CD4-positive, alpha-beta T cell (primary cell): ENCODE measurements at regions of chr4 and their contacts with region 1.

Region 1: GRCh38 chr4:108018040-108018883 is 28.6 kb downstream of the HADH start:
- DNase-seq: peak; percentile 74 to 92 (median 84)
- ATAC-seq: peak; percentile 89
- H3K4me3 ChIP-seq: no peak overlapping the region
- H3K4me3 Mint-ChIP-seq: no peak overlapping the region
- H3K27ac ChIP-seq: no peak overlapping the region
- H3K27ac Mint-ChIP-seq: no peak overlapping the region
- H3K4me1 ChIP-seq: no peaks in the 10 kb centered on the region
- H3K4me1 Mint-ChIP-seq: peaks cover 15% of the 10 kb centered on the region
- H3K27me3 ChIP-seq: no peaks in the 10 kb centered on the region
- H3K27me3 Mint-ChIP-seq: no peaks in the 10 kb centered on the region
- CTCF ChIP-seq: peak; percentile 85

Region 2: GRCh38 chr4:106690487-106690886 is 1327.8 kb before region 1 on chr4:
- CTCF ChIA-PET with region 1: no interaction called
- POLR2A ChIA-PET with region 1: no interaction called
- intact Hi-C with region 1: no loop called
- DNase-seq: peak in 2 of 14 experiments; percentile 26 to 36
- ATAC-seq: no peak
- H3K4me3 ChIP-seq: no peak overlapping the region
- H3K4me3 Mint-ChIP-seq: no peak overlapping the region
- H3K27ac ChIP-seq: no peak overlapping the region
- H3K27ac Mint-ChIP-seq: no peak overlapping the region
- H3K4me1 ChIP-seq: no peaks in the 10 kb centered on the region
- H3K4me1 Mint-ChIP-seq: no peaks in the 10 kb centered on the region
- H3K27me3 ChIP-seq: no peaks in the 10 kb centered on the region
- H3K27me3 Mint-ChIP-seq: no peaks in the 10 kb centered on the region
- CTCF ChIP-seq: no peak

Region 3: DNA sequence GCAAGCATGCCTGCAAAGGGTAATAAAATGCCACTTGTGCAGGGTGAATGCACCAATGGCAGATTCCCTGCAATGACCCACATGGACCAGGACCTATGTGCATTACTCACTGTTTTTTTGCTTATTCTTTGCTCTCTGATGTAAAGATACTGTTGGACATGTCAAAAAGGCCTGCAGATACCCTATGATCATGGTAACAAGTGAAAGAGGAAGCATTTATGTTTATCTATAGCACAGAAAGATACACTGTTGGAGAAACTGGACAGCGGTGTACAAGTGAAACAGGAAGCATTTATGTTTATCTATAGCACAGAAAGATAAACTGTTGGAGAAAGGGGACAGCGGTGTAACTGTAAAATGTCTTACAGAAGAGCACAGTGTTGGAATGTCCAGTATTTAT is 425.7 kb before region 1 on chr4:
- CTCF ChIA-PET with region 1: no interaction called
- POLR2A ChIA-PET with region 1: no interaction called
- intact Hi-C with region 1: no loop called
- DNase-seq: no peak
- ATAC-seq: no peak
- H3K4me3 ChIP-seq: no peak overlapping the region
- H3K4me3 Mint-ChIP-seq: no peak overlapping the region
- H3K27ac ChIP-seq: no peak overlapping the region
- H3K27ac Mint-ChIP-seq: no peak overlapping the region
- H3K4me1 ChIP-seq: no peaks in the 10 kb centered on the region
- H3K4me1 Mint-ChIP-seq: no peaks in the 10 kb centered on the region
- H3K27me3 ChIP-seq: no peaks in the 10 kb centered on the region
- H3K27me3 Mint-ChIP-seq: peaks cover 11% of the 10 kb centered on the region
- CTCF ChIP-seq: no peak

Region 4: GRCh38 chr4:107780665-107781064 is 237.6 kb before region 1 on chr4:
- CTCF ChIA-PET with region 1: no interaction called
- POLR2A ChIA-PET with region 1: no interaction called
- intact Hi-C with region 1: no loop called
- DNase-seq: peak in 2 of 14 experiments; percentile 4 to 7
- ATAC-seq: no peak
- H3K4me3 ChIP-seq: no peak overlapping the region
- H3K4me3 Mint-ChIP-seq: no peak overlapping the region
- H3K27ac ChIP-seq: no peak overlapping the region
- H3K27ac Mint-ChIP-seq: no peak overlapping the region
- H3K4me1 ChIP-seq: no peaks in the 10 kb centered on the region
- H3K4me1 Mint-ChIP-seq: no peaks in the 10 kb centered on the region
- H3K27me3 ChIP-seq: peaks cover 0 to 4% of the 10 kb centered on the region in 2 experiments
- H3K27me3 Mint-ChIP-seq: peaks cover 31% of the 10 kb centered on the region
- CTCF ChIP-seq: no peak

Region 5: GRCh38 chr4:108060164-108060563 is 41.9 kb after region 1 on chr4:
- CTCF ChIA-PET with region 1: interaction called, 10 read pairs
- POLR2A ChIA-PET with region 1: no interaction called
- intact Hi-C with region 1: no loop called
- DNase-seq: peak in 3 of 14 experiments; percentile 42 to 48 (median 48)
- ATAC-seq: no peak
- H3K4me3 ChIP-seq: no peak overlapping the region
- H3K4me3 Mint-ChIP-seq: no peak overlapping the region
- H3K27ac ChIP-seq: peak overlapping the region in 1 of 2 donors; percentile 38
- H3K27ac Mint-ChIP-seq: peak overlapping the region; percentile 93
- H3K4me1 ChIP-seq: peaks cover 52% of the 10 kb centered on the region
- H3K4me1 Mint-ChIP-seq: peaks cover 94% of the 10 kb centered on the region
- H3K27me3 ChIP-seq: no peaks in the 10 kb centered on the region
- H3K27me3 Mint-ChIP-seq: no peaks in the 10 kb centered on the region
- CTCF ChIP-seq: peak; percentile 12

Region 6: GRCh38 chr4:108512615-108513505 is 494.6 kb after region 1 on chr4:
- CTCF ChIA-PET with region 1: interaction called, 5 read pairs
- POLR2A ChIA-PET with region 1: no interaction called
- intact Hi-C with region 1: loop called in 1 of 2 experiments (anchors 1 kb)
- DNase-seq: peak; percentile 11 to 76 (median 42)
- ATAC-seq: peak; percentile 95
- H3K4me3 ChIP-seq: no peak overlapping the region
- H3K4me3 Mint-ChIP-seq: peak overlapping the region; percentile 78
- H3K27ac ChIP-seq: no peak overlapping the region
- H3K27ac Mint-ChIP-seq: no peak overlapping the region
- H3K4me1 ChIP-seq: peaks cover 3% of the 10 kb centered on the region
- H3K4me1 Mint-ChIP-seq: peaks cover 21% of the 10 kb centered on the region
- H3K27me3 ChIP-seq: no peaks in the 10 kb centered on the region
- H3K27me3 Mint-ChIP-seq: no peaks in the 10 kb centered on the region
- CTCF ChIP-seq: peak; percentile 29

Region 7: GRCh38 chr4:108540536-108540935 is 522.3 kb after region 1 on chr4:
- CTCF ChIA-PET with region 1: no interaction called
- POLR2A ChIA-PET with region 1: no interaction called
- intact Hi-C with region 1: no loop called
- DNase-seq: no peak
- ATAC-seq: no peak
- H3K4me3 ChIP-seq: no peak overlapping the region
- H3K4me3 Mint-ChIP-seq: no peak overlapping the region
- H3K27ac ChIP-seq: no peak overlapping the region
- H3K27ac Mint-ChIP-seq: no peak overlapping the region
- H3K4me1 ChIP-seq: peaks cover 6% of the 10 kb centered on the region
- H3K4me1 Mint-ChIP-seq: peaks cover 49% of the 10 kb centered on the region
- H3K27me3 ChIP-seq: no peaks in the 10 kb centered on the region
- H3K27me3 Mint-ChIP-seq: no peaks in the 10 kb centered on the region
- CTCF ChIP-seq: no peak

Region 8: DNA sequence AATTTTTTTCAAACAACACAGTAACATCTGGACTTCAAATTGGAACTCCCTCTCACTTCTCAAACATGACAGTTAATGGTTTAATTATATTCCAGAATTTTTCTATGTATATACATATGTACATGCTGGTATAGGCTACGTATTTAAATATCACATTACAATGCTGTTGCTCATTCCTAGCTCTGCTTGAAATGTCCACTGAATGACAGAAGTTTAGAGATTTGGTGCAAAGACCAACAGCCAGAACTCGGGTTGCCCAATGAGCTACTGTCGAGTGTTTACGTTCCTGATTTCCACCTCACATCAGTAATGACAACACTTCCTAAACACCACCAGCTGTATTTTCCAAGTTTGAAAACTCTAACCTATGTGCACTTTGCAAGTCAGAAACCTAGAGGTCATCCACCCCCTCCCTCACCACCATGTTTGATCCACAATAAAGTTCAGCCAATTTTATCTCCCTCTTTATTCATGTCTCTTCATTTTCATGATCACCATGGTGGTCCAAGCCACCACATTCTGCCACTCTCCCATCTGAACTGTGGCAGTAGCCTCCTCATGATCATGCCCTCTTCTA is 552.8 kb after region 1 on chr4:
- CTCF ChIA-PET with region 1: interaction called, 62 read pairs
- POLR2A ChIA-PET with region 1: interaction called, 7 read pairs
- intact Hi-C with region 1: loop called (anchors 1 kb)
- DNase-seq: no peak
- ATAC-seq: no peak
- H3K4me3 ChIP-seq: no peak overlapping the region
- H3K4me3 Mint-ChIP-seq: no peak overlapping the region
- H3K27ac ChIP-seq: no peak overlapping the region
- H3K27ac Mint-ChIP-seq: no peak overlapping the region
- H3K4me1 ChIP-seq: peaks cover 9% of the 10 kb centered on the region
- H3K4me1 Mint-ChIP-seq: peaks cover 33% of the 10 kb centered on the region
- H3K27me3 ChIP-seq: no peaks in the 10 kb centered on the region
- H3K27me3 Mint-ChIP-seq: no peaks in the 10 kb centered on the region
- CTCF ChIP-seq: no peak

Region 9: DNA sequence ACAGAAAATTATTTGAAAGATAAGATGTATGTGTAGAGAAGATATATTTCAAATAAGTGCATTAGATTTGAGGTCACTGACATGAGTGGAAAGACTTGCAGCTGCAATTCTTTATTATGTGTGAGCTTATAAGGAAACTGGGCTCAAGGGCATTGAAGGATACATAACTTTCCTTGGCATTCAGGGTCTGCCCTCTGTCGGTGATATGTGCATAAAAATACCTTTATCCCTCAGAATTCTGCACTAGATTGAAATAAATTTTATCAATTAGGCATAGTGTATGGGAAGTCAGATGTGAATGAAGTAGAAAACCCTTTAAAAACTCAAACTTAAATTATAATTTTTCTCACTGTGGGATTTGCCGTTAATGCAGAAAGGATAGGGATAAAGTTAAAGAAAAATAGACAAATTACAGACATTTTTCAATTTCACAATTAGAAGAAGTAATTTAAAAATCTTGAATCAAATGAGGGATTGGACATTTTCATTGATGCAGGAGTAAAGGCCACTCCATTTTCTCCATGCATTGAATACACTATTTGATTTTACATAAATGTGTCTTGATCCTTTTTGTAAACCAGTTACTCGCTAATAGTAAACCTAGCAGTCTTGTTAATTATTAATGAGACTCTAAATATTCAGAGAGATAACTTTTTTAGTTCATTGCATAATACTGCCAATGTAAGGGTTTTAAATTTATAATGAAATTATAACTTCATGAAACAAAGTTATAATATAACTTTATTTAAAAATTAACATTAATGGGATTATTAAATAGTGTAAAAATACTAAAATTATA is 765.6 kb after region 1 on chr4:
- CTCF ChIA-PET with region 1: interaction called, 3 read pairs
- POLR2A ChIA-PET with region 1: no interaction called
- intact Hi-C with region 1: loop called in 1 of 2 experiments (anchors 5 kb)
- DNase-seq: peak in 2 of 14 experiments; percentile 12 to 24
- ATAC-seq: no peak
- H3K4me3 ChIP-seq: no peak overlapping the region
- H3K4me3 Mint-ChIP-seq: no peak overlapping the region
- H3K27ac ChIP-seq: no peak overlapping the region
- H3K27ac Mint-ChIP-seq: no peak overlapping the region
- H3K4me1 ChIP-seq: no peaks in the 10 kb centered on the region
- H3K4me1 Mint-ChIP-seq: no peaks in the 10 kb centered on the region
- H3K27me3 ChIP-seq: peaks cover 0 to 4% of the 10 kb centered on the region in 2 experiments
- H3K27me3 Mint-ChIP-seq: peaks cover 15% of the 10 kb centered on the region
- CTCF ChIP-seq: no peak

Region 10: GRCh38 chr4:109406338-109406931 is 1388.2 kb after region 1 on chr4:
- CTCF ChIA-PET with region 1: interaction called, 8 read pairs
- POLR2A ChIA-PET with region 1: no interaction called
- intact Hi-C with region 1: loop called (anchors 1 to 2 kb)
- DNase-seq: peak in 7 of 14 experiments; percentile 3 to 72 (median 37)
- ATAC-seq: peak; percentile 65
- H3K4me3 ChIP-seq: no peak overlapping the region
- H3K4me3 Mint-ChIP-seq: no peak overlapping the region
- H3K27ac ChIP-seq: no peak overlapping the region
- H3K27ac Mint-ChIP-seq: no peak overlapping the region
- H3K4me1 ChIP-seq: no peaks in the 10 kb centered on the region
- H3K4me1 Mint-ChIP-seq: no peaks in the 10 kb centered on the region
- H3K27me3 ChIP-seq: peaks cover 0 to 2% of the 10 kb centered on the region in 2 experiments
- H3K27me3 Mint-ChIP-seq: peaks cover 4% of the 10 kb centered on the region
- CTCF ChIP-seq: peak; percentile 77